ENCODE measurements at regions of chr20 and their contacts with region 1.

Region 1: DNA sequence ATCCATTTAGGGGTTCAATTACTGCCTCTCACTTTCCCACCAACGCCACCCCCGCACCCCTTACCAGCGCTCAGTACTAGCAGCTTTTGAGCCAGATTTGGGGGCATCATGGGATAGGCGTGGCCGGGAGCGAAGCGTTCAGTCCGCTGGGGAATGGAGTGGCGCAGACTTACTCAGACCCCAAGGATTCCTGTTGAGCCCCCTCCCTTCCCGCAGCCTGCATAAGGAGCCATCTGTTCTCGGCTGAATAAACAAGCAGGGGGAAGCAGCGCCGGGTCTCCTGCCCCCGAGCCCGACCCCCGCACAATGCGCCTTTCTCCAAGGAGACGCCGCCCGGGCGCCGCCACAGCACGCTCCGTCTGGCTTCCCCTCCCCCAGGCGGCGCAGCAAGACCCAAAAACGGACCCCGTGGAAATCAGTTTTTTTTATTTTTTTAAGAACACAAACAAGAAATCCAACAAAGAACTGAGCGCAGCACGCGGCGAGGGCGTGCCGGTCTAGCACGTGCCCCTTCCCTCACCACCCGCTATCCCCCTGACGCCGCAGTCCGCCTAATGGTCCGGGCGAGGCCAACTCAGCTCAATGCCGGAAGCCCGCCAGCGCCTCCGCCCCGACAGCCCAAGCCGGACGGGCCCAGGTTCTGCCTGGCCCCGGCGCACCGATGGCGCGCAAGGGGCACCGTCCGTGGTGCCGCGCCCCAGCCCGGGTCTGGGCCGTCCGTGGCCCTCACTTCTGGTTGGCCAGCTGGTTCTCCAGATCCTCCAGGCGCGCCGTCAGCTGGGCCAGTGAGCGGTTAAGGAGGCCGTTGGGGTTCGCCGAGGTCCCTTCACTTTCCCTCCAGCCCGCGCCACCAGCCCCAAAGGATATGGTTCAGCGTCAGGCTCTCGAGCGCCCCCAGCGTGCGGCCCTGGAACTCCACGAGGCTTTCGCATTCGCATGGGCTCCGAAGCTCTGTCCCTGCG is 13.3 kb upstream of the RBPJL start:
- DNase-seq: no peak
- H3K4me3 ChIP-seq: peak overlapping the region; percentile 61
- CTCF ChIP-seq: peak; percentile 98

Region 2: DNA sequence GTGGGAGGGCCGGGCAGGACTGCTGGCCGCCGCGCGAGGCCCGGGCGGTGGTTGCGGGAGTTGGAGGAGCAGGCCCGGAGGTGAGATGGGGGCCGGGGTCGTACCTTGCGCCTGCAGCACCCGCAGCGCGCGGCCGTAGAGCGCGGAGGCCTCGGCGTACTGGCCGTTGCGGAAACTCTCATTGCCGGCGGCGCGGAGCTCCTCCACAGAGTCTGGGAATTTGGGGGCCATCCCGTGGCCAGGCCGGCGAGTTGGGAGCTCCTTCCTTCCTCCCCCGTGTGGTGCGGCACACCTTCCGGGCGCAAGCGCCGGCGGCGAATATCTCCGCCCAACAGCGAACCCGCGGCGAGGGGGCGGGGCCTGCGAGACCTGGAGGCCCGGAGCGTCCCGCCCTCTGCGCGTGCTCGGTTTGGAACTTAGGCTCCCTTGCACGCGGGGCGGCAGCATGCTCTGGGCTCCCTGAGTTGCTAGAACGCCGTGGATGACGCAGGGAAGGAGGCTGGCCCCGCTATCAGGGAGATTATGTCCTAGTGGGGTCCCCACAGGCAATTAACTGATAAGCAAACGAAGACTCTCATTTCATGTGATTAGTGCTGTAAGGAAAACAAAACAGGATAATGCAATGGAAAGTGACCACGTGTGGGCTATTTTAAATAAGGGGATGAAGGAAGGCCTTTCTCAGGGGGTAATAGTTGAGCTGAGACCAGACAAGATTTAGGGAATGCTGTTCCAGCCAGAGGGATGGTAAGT is 333.0 kb before region 1 on chr20 and contains the start of gene TOMM34:
- CTCF ChIA-PET with region 1: interaction called, 30 read pairs
- POLR2A ChIA-PET with region 1: no interaction called
- DNase-seq: peak; percentile 21
- H3K4me3 ChIP-seq: peak within 1 kb of the TSS; percentile 85
- CTCF ChIP-seq: no peak

Region 3: DNA sequence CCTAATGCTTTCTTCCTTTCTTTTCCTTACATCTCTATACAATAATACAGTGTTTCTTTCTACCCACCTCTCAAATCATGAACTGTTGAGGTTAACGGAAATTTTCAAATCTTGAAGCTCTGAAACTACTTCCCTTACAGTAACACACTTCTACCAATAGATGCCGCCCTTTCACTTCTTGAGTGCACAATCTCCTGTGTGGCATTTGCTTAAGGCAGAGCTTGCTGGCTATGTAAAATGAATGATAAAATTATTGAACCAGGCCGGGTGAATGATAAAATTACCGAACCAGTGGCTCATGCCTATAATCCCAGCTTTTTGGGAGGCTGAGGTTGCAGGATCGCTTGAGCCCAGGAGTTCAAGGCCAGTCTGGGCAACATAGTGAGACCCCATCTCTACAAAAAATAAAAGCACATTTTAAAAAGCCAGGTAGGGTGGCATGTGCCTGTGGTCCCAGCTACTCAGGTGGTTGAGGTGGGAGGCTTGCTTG is 249.2 kb before region 1 on chr20:
- CTCF ChIA-PET with region 1: interaction called, 183 read pairs
- POLR2A ChIA-PET with region 1: interaction called, 3 read pairs
- DNase-seq: peak; percentile 36
- H3K4me3 ChIP-seq: no peak overlapping the region
- CTCF ChIP-seq: peak; percentile 77

Region 4: DNA sequence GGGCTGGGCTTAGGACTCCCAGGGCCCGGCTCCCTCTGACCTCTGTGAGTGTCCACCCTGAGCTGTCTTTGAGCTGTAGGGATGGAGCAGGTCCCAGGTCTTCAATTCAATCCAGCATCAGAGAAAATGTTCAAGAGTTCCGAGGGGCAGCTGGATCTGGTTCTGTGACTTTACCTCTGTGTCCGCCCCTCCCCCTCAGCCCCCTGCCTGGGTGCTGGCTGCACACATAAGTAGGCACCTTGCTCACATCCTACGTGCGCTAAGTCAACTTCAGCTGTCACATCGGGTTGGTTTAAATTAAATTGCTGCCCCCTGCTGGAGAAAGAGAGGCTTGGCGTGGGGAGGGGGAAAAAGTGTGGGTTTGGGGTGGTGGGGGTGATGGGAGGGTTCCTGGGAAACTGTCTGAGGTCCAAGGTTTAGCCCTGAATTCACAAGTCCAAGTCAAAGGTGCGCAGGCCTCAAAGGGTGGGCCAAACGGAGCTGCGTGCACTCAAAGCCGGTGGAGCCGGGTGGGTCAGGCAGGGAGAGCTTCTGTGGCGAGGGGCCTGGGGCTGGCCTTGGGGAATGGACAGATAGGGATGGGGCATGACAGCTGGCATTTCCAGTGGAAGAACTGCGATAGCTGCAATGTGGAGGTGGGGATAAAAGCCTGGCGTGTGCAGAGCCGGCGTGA is 181.4 kb before region 1 on chr20:
- CTCF ChIA-PET with region 1: interaction called, 112 read pairs
- POLR2A ChIA-PET with region 1: no interaction called
- DNase-seq: no peak
- H3K4me3 ChIP-seq: no peak overlapping the region
- CTCF ChIP-seq: peak; percentile 27

Region 5: GRCh38 chr20:45311589-45312211 is 18.4 kb after region 1 on chr20:
- CTCF ChIA-PET with region 1: interaction called, 38 read pairs
- POLR2A ChIA-PET with region 1: no interaction called
- DNase-seq: no peak
- H3K4me3 ChIP-seq: no peak overlapping the region
- CTCF ChIP-seq: peak; percentile 94

Region 6: DNA sequence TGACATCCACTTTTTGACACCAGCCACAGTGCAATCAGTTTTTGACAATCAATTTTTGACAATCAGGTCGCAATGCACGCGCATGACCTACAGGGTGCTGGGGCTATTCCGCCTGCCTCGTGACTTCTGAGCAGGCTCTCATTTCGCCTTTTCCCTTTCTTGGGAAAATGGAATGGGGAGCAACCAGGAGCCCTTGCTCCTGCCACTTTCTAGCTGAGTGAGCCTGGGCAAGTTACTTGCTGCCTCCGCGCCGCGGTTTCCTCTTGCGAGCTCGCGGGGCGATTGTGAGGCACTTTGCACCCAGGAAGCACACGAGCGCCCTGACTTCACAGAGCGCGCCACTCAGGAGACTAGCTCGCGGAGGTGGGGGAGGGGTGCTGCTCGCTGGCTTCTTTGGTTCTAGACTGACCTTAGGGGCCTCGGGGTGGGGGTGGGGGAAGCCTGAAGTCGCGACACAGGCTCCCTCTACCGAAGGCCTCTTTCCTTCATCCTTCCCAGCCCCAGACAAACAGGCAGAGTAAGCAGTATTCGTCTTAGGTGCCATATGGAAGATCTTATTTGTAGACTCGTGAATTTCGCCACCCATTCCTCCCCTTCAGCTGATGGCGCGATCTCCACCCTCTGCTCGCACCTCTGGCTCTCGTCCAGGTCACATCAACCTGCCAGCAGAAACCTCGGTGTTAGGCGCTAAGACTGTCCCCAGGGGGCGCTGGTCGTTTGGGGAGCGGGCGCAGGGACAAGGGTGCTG is 80.2 kb after region 1 on chr20:
- CTCF ChIA-PET with region 1: interaction called, 10 read pairs
- POLR2A ChIA-PET with region 1: no interaction called
- DNase-seq: no peak
- H3K4me3 ChIP-seq: peak overlapping the region; percentile 55
- CTCF ChIP-seq: peak; percentile 95